Heart left ventricle (tissue), 16 donors: ENCODE measurements at regions of chr7 and their contacts with region 1.

Region 1: GRCh38 chr7:30026229-30027064 is at the start of gene FKBP14:
- DNase-seq: peak; percentile 97 to 98 (median 98)
- ATAC-seq: peak; percentile 94 to 98 (median 94)
- H3K4me3 ChIP-seq: peak within 1 kb of the TSS; percentile 62 to 98 (median 88)
- H3K27ac ChIP-seq: peak within 1 kb of the TSS; percentile 48 to 97 (median 90)
- H3K4me1 ChIP-seq: peaks cover 0 to 47% (median 30%) of the 10 kb centered on the region in 12 donors
- H3K27me3 ChIP-seq: no peaks in the 10 kb centered on the region
- CTCF ChIP-seq: no peak
- POLR2A ChIP-seq: no peak
- total RNA-seq, gene FKBP14: 4.4 to 19.0 (median 14.2) TPM

Region 2: GRCh38 chr7:29988424-29989256 is 37.8 kb before region 1 on chr7:
- intact Hi-C with region 1: loop called in 1 of 10 experiments (anchors 5 kb)
- DNase-seq: peak; percentile 39 to 73 (median 50)
- ATAC-seq: peak in 3 of 4 donors; percentile 48 to 69 (median 66)
- H3K4me3 ChIP-seq: peak overlapping the region; percentile 47 to 97 (median 88)
- H3K27ac ChIP-seq: peak overlapping the region; percentile 43 to 91 (median 80)
- H3K4me1 ChIP-seq: peaks cover 0 to 19% (median 3%) of the 10 kb centered on the region in 12 donors
- H3K27me3 ChIP-seq: peaks cover 0 to 24% (median 0%) of the 10 kb centered on the region in 9 donors
- CTCF ChIP-seq: no peak
- POLR2A ChIP-seq: no peak

Region 3: GRCh38 chr7:30062591-30062990 is 36.1 kb after region 1 on chr7:
- intact Hi-C with region 1: loop called in 1 of 10 experiments (anchors 5 kb)
- DNase-seq: no peak
- ATAC-seq: peak in 2 of 4 donors; percentile 65
- H3K4me3 ChIP-seq: no peak overlapping the region
- H3K27ac ChIP-seq: no peak overlapping the region
- H3K4me1 ChIP-seq: peaks cover 0 to 11% (median 0%) of the 10 kb centered on the region in 12 donors
- H3K27me3 ChIP-seq: no peaks in the 10 kb centered on the region
- CTCF ChIP-seq: peak; percentile 37 to 72 (median 54)
- POLR2A ChIP-seq: no peak

Region 4: DNA sequence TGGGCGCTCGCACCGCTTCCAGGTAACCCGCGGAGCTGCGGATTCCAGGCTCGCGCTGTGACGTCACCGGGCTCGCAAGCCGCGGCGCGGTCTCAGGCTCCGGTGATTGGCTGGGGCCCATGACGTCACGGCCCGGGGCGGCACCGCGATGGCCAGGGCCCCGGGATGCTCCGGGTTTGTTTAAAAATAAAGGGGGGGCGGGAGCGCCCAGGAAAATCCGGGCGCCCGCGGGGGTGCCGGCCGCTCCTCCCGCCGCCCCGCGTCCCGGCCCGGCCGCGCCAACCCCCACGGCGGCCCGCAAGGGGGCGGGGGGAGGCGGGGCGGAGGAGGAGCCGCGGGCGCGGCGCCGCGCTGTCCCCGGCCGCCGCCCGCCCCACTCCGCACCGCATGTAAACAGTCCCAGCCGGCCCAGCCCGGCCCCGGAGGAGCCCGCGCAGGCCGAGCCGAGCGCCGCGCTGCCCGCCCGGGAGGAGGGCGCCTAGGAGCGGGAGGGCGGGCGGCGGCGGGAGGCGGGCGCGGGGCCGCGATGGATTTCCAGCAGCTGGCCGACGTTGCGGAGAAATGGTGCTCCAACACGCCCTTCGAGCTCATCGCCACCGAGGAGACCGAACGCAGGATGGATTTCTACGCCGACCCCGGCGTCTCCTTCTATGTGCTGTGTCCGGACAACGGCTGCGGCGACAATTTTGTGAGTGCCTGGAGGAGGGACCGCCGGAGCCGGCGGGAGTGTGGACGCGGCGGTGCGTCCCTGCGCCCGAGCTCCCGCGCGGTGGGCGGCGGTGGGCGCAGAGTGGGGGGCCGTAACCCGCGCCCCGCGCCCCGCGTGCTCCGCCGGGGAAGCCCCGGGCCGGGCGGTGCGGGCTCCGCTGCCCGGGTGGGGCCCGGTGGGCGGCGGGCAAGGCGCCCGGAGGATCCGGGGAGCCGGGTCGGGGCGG is 108.4 kb after region 1 on chr7 and contains the start of gene MTURN:
- intact Hi-C with region 1: loop called in 1 of 10 experiments (anchors 2 kb)
- DNase-seq: peak; percentile 89 to 94 (median 91)
- ATAC-seq: peak; percentile 77 to 89 (median 86)
- H3K4me3 ChIP-seq: peak within 1 kb of the TSS; percentile 70 to 99 (median 96)
- H3K27ac ChIP-seq: peak within 1 kb of the TSS; percentile 79 to 96 (median 90)
- H3K4me1 ChIP-seq: peaks cover 0 to 40% (median 8%) of the 10 kb centered on the region in 12 donors
- H3K27me3 ChIP-seq: no peaks in the 10 kb centered on the region
- CTCF ChIP-seq: no peak
- POLR2A ChIP-seq: peak in 1 of 2 donors; percentile 48
- total RNA-seq, gene MTURN: 16.7 to 45.2 (median 21.6) TPM

Region 5: GRCh38 chr7:30284298-30285066 is 258.0 kb after region 1 on chr7 and contains the start of gene ZNRF2:
- intact Hi-C with region 1: loop called in 1 of 10 experiments (anchors 10 kb)
- DNase-seq: peak; percentile 98 to 100 (median 99)
- ATAC-seq: peak; percentile 96 to 99 (median 98)
- H3K4me3 ChIP-seq: peak within 1 kb of the TSS; percentile 54 to 98 (median 85)
- H3K27ac ChIP-seq: peak within 1 kb of the TSS; percentile 95 to 99 (median 98)
- H3K4me1 ChIP-seq: peaks cover 0 to 44% (median 23%) of the 10 kb centered on the region in 12 donors
- H3K27me3 ChIP-seq: no peaks in the 10 kb centered on the region
- CTCF ChIP-seq: peak; percentile 19 to 80 (median 54)
- POLR2A ChIP-seq: peak in 1 of 2 donors; percentile 79
- total RNA-seq, gene ZNRF2: 7.3 to 15.2 (median 10.9) TPM